ENCODE measurements at regions of chr6 and their contacts with region 1.

Region 1: DNA sequence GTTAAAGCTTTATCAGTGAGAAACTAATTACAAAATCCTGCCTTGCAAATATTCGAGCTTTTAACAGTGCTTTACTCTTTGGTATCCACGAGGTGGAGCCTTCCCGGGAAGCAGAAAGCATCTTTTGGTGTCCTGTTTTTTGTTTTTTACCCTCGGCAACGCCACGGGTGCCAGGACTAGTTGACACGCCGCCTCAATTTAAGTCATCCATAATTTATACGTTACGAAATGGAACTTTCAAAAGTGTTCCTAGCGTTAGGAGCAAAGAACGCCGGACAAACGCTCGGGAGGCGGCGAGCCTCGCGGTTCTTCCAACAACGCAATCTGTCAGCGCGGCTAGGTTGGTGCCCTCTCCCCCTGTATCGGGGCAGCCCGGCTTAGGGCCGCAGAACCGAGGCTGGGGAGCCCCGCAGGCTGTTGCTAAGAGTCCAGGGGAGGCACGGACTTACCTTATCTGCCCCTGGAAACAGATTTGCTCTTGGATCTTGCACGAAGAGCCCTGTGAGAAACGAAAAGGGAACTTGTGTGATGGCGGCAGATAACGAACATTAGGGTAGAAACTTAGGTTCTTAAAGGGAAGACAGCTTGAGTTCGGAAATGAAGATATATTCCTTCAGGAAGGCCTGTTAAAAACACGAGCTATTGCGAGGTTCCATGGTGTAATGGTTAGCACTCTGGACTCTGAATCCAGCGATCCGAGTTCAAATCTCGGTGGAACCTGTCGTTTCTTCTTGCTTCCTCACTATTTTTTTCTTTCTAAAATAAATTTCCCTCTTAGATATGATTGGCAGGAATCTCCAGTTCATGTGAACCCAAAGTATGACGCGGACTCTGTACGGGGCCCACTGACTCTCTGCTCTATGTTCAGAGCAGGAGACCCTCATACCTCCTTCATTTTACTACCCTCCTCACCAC is 46.2 kb upstream of the ZNF184 start:
- DNase-seq: peak; percentile 87
- ATAC-seq: peak; percentile 67
- H3K4me3 ChIP-seq: peak overlapping the region; percentile 67 to 89 (median 76)
- H3K4me3 Mint-ChIP-seq: peak overlapping the region; percentile 85
- H3K27ac ChIP-seq: peak overlapping the region; percentile 52 to 69
- H3K27ac Mint-ChIP-seq: peak overlapping the region; percentile 70
- H3K4me1 ChIP-seq: peaks cover 8 to 19% of the 10 kb centered on the region in 2 donors
- H3K4me1 Mint-ChIP-seq: peaks cover 15% of the 10 kb centered on the region
- H3K27me3 ChIP-seq: peaks cover 0 to 18% (median 10%) of the 10 kb centered on the region in 4 experiments
- H3K27me3 Mint-ChIP-seq: peaks cover 22% of the 10 kb centered on the region
- CTCF ChIP-seq: peak; percentile 80

Region 2: DNA sequence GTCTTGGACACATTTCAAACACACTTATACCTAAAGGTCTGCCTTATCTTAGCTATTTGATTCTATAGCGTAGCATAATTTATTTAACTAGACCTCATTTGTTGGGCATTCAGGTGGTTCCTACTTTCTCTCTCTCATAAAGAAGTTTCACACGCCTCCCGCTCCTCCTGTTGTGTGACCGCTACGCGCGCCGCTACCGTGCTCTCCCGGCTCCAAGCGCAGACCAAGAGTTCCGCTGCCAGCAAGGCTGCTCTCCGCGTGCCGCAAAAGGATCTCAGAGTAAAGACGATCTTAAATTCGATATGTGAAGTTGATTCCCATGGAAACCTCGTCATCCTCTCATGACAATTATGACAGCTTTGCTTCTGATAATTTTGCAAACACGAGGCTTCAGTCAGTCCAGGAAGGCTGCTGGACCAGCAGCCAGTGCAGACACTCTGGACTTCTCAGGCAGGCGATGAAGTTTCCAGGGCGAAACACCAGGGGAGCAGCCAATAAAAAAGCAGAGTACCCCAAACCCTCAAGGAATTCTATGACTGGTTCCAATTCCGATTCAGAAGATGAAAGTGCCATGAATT is 251.2 kb before region 1 on chr6:
- CTCF ChIA-PET with region 1: no interaction called
- POLR2A ChIA-PET with region 1: no interaction called
- intact Hi-C with region 1: no loop called
- DNase-seq: no peak
- ATAC-seq: no peak
- H3K4me3 ChIP-seq: no peak overlapping the region
- H3K4me3 Mint-ChIP-seq: no peak overlapping the region
- H3K27ac ChIP-seq: no peak overlapping the region
- H3K27ac Mint-ChIP-seq: no peak overlapping the region
- H3K4me1 ChIP-seq: no peaks in the 10 kb centered on the region
- H3K4me1 Mint-ChIP-seq: no peaks in the 10 kb centered on the region
- H3K27me3 ChIP-seq: peaks cover 0 to 29% (median 22%) of the 10 kb centered on the region in 4 experiments
- H3K27me3 Mint-ChIP-seq: peaks cover 56% of the 10 kb centered on the region
- CTCF ChIP-seq: no peak

Region 3: DNA sequence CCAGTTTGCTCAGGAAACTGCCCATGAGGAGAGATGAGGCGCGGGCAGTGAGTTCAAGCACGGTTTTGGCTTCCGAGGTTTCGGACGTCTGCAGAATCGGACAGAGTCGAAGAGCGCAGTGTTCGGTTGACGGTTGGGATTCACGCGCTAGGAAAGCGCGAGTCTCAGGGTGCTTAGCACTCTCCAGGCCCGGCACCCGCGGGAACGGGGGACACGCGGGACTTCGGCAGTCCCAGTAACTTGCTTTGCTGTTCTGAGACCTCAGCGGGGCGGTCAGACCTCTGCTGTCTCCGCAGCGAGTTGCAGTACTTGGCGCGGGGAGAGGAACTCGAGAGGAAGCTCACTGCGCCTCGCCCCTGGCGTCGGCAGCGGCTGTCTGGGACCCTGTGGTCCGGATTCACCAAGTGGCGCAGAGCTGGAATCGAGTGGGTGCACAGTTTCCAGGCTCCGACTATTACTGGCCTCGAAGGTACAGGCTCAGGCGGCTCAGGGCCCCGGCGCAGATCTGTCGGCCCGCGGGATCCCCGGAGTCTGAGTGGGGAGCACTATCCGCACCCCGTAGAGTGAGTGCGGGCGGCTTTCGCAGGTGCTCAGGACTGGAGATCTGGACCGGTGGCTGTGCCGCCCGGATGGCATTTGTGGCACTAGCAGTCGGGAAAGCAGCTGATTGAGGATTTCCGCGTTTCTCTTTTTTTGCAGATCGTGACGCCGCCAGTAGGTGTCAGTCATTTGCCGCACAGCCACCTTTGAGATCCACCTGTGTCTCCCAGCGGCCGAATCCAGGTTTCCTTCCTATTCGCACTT is 206.8 kb before region 1 on chr6 and contains the start of gene POM121L2:
- CTCF ChIA-PET with region 1: interaction called, 4 read pairs
- POLR2A ChIA-PET with region 1: no interaction called
- intact Hi-C with region 1: loop called (anchors 2 kb)
- DNase-seq: peak; percentile 82
- ATAC-seq: peak; percentile 60
- H3K4me3 ChIP-seq: peak within 1 kb of the TSS; percentile 5 to 69 (median 62)
- H3K4me3 Mint-ChIP-seq: peak within 1 kb of the TSS; percentile 88
- H3K27ac ChIP-seq: no peak within 1 kb of the TSS
- H3K27ac Mint-ChIP-seq: no peak within 1 kb of the TSS
- H3K4me1 ChIP-seq: peaks cover 12 to 13% of the 10 kb centered on the region in 2 donors
- H3K4me1 Mint-ChIP-seq: peaks cover 13% of the 10 kb centered on the region
- H3K27me3 ChIP-seq: peaks cover 0 to 56% (median 38%) of the 10 kb centered on the region in 4 experiments
- H3K27me3 Mint-ChIP-seq: peaks cover 70% of the 10 kb centered on the region
- CTCF ChIP-seq: peak; percentile 82
- total RNA-seq, gene POM121L2: not detected in 2 replicates

Region 4: DNA sequence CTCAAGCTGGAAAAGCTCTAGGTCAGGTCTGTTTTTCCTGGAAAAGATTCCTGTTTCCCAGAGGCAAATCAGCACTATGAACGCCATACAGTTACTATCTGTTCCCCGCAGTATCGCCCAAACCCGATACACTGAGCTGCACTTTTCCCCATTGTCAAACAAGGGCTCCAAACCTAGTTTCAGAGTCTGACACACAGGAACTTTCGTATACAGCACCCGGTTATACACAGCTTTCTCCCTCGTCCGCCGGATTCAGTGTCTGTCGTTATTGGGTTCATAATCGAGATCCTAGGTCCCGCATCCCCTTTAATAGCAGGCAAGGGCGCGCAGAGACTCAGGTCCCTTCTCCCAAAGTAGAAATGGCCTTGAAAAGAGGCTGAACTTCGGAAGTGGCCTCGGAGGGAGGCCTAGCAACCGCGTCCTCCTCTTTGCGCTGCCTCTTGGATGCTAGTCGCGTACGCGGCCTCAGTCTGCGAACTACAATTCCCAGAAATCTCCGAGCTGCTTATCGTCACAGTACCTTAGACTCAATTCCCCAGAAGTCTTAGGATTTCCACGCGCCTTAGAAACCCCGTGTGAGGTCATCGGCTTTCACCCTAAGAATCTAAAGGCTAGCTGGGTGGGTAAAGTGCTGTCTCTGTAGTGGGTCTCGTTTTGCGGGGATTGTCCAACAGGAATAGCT is 96.3 kb before region 1 on chr6:
- CTCF ChIA-PET with region 1: no interaction called
- POLR2A ChIA-PET with region 1: no interaction called
- intact Hi-C with region 1: no loop called
- DNase-seq: no peak
- ATAC-seq: no peak
- H3K4me3 ChIP-seq: no peak overlapping the region
- H3K4me3 Mint-ChIP-seq: no peak overlapping the region
- H3K27ac ChIP-seq: no peak overlapping the region
- H3K27ac Mint-ChIP-seq: no peak overlapping the region
- H3K4me1 ChIP-seq: no peaks in the 10 kb centered on the region
- H3K4me1 Mint-ChIP-seq: no peaks in the 10 kb centered on the region
- H3K27me3 ChIP-seq: no peaks in the 10 kb centered on the region
- H3K27me3 Mint-ChIP-seq: peaks cover 15% of the 10 kb centered on the region
- CTCF ChIP-seq: no peak

Region 5: GRCh38 chr6:27479319-27480182 is 39.6 kb before region 1 on chr6:
- CTCF ChIA-PET with region 1: interaction called, 15 read pairs
- POLR2A ChIA-PET with region 1: interaction called, 4 read pairs
- intact Hi-C with region 1: loop called (anchors 2 kb)
- DNase-seq: peak; percentile 96
- ATAC-seq: peak; percentile 77
- H3K4me3 ChIP-seq: peak overlapping the region; percentile 88 to 97 (median 95)
- H3K4me3 Mint-ChIP-seq: no peak overlapping the region
- H3K27ac ChIP-seq: peak overlapping the region; percentile 98
- H3K27ac Mint-ChIP-seq: no peak overlapping the region
- H3K4me1 ChIP-seq: peaks cover 15 to 17% of the 10 kb centered on the region in 2 donors
- H3K4me1 Mint-ChIP-seq: peaks cover 6% of the 10 kb centered on the region
- H3K27me3 ChIP-seq: no peaks in the 10 kb centered on the region
- H3K27me3 Mint-ChIP-seq: no peaks in the 10 kb centered on the region
- CTCF ChIP-seq: no peak

Region 6: GRCh38 chr6:27503436-27504030 is 15.6 kb before region 1 on chr6:
- CTCF ChIA-PET with region 1: interaction called, 23 read pairs
- POLR2A ChIA-PET with region 1: no interaction called
- intact Hi-C with region 1: loop called (anchors 1 kb)
- DNase-seq: peak; percentile 89
- ATAC-seq: peak; percentile 44
- H3K4me3 ChIP-seq: peak overlapping the region; percentile 48 to 82 (median 74)
- H3K4me3 Mint-ChIP-seq: peak overlapping the region; percentile 85
- H3K27ac ChIP-seq: peak overlapping the region in 1 of 2 donors; percentile 64
- H3K27ac Mint-ChIP-seq: peak overlapping the region; percentile 81
- H3K4me1 ChIP-seq: peaks cover 9 to 24% of the 10 kb centered on the region in 2 donors
- H3K4me1 Mint-ChIP-seq: peaks cover 38% of the 10 kb centered on the region
- H3K27me3 ChIP-seq: peaks cover 0 to 4% (median 1%) of the 10 kb centered on the region in 4 experiments
- H3K27me3 Mint-ChIP-seq: peaks cover 9% of the 10 kb centered on the region
- CTCF ChIP-seq: no peak

Measured in B cell (primary cell).